ENCODE measurements at regions of chr9 and their contacts with region 1.

Region 1: GRCh38 chr9:132575005-132575609 is 7.3 kb upstream of the BARHL1 start:
- DNase-seq: peak; percentile 78
- H3K4me3 ChIP-seq: no peak overlapping the region
- H3K27ac ChIP-seq: no peak overlapping the region
- H3K4me1 ChIP-seq: peaks cover 0 to 6% (median 0%) of the 10 kb centered on the region in 4 donors
- H3K27me3 ChIP-seq: peaks cover 23 to 80% (median 38%) of the 10 kb centered on the region in 3 donors
- CTCF ChIP-seq: peak; percentile 65 to 80 (median 71)
- EP300 ChIP-seq: no peak
- POLR2A ChIP-seq: no peak

Region 2: DNA sequence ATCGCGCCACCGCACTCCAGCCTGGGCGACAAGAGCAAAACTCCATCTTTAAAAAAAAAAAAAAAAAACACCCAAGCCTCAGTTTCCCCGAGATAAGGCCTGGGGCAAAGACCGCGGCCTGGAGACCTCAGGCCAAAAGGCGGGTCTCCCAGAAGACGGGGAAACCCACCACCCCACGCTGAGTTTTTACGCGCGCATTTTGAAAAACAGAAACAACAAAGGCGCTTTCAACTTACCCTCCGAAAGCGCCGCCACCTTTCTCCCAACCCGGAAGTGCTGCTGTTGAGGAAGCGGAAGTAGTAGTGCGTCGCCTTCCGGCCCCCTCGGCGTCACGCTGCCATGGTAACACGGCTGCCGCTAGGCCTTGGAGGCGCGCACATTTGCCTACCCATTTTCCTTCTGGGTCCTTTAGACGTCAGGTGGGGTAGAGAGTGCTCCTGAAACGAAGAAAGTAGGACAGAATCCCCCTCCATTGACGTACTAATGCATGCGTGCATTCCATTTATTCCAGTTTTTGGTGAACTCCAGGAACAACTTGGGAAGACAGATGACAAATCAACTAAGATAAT is 168.5 kb before region 1 on chr9 and contains the start of gene TTF1:
- intact Hi-C with region 1: loop called (anchors 5 kb)
- DNase-seq: peak; percentile 95
- H3K4me3 ChIP-seq: peak within 1 kb of the TSS; percentile 64 to 78 (median 70)
- H3K27ac ChIP-seq: peak within 1 kb of the TSS; percentile 23 to 57 (median 54)
- H3K4me1 ChIP-seq: peaks cover 0 to 38% (median 35%) of the 10 kb centered on the region in 4 donors
- H3K27me3 ChIP-seq: peaks cover 13 to 26% (median 23%) of the 10 kb centered on the region in 3 donors
- CTCF ChIP-seq: no peak
- EP300 ChIP-seq: no peak
- POLR2A ChIP-seq: no peak
- total RNA-seq, gene TTF1: 8.9 to 20.9 (median 14.2) TPM

Region 3: DNA sequence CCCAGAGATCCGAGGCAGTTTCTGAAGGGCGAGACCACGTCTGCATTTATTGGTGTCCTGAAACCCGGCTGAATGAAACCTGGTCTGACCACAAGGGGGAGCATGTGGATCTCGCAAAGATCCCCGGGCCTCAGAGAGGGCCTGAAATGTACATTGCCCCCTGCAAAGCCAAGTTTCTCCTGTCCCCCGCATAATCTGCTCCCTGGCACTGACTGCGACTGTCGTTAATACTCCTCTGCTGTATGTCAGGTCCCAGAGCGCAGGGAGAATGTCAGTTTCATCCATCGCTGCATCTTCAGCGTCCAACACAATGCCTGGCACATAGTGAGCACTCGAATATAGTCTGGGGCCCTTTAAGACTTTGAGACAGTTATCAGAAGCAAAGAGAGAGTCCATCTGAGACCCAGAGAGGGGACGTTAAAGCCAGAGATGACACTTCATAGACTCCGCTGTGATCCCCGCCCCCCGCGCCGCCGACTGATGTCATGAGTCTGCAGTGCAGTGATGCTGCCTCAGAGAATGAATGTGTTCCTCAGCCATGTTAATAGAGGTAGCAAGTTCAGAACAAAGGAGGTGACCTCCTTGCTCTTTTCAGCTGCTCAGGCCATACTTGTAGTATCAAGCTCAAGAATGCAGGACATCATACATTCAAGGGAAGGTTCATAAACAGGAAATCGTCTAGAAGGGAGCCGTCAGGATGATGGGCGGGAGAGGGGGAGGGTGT is 67.2 kb before region 1 on chr9:
- intact Hi-C with region 1: loop called (anchors 1 kb)
- DNase-seq: peak; percentile 72
- H3K4me3 ChIP-seq: no peak overlapping the region
- H3K27ac ChIP-seq: no peak overlapping the region
- H3K4me1 ChIP-seq: no peaks in the 10 kb centered on the region
- H3K27me3 ChIP-seq: peaks cover 0 to 72% (median 17%) of the 10 kb centered on the region in 3 donors
- CTCF ChIP-seq: peak; percentile 70 to 73 (median 71)
- EP300 ChIP-seq: no peak
- POLR2A ChIP-seq: no peak

Region 4: GRCh38 chr9:133205996-133206931 is 631.2 kb after region 1 on chr9:
- intact Hi-C with region 1: no loop called
- DNase-seq: peak; percentile 50
- H3K4me3 ChIP-seq: no peak overlapping the region
- H3K27ac ChIP-seq: no peak overlapping the region
- H3K4me1 ChIP-seq: no peaks in the 10 kb centered on the region
- H3K27me3 ChIP-seq: peaks cover 0 to 22% (median 0%) of the 10 kb centered on the region in 3 donors
- CTCF ChIP-seq: no peak
- EP300 ChIP-seq: no peak
- POLR2A ChIP-seq: no peak